ENCODE measurements at regions of chr6 and their contacts with region 1.

Region 1: DNA sequence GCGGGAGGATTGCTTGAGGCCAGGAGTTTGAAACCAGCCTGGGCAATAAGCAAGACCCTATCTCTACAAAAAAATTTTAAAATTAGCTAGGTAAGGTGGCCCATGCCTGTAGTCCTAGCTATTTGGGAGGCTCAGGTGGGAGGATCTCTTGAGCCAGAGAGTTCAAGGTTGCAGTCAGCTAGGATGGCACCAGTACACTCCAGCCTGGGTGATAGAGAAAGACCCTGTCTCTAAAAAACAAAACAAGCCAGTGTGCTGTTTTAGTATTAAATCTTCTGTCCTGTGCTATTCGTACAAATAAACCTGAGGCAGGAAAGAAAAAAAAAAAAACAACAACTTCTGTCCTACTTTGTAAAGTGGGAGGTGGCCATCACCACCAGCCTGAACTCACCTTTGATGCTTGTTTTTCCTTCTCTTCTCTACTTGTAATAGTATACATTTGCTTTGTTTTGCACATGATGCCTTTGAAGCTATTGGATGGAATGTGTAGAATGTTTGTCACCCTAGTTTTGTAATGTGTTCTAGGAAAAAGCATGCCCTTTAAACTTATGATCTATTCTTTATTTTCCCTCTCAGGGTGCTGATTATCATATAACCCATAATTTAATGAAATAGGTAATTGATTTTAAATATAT is 102.5 kb downstream of the CRYBG1 start:
- DNase-seq: no peak
- H3K27ac ChIP-seq: no peak overlapping the region
- CTCF ChIP-seq: no peak

Region 2: DNA sequence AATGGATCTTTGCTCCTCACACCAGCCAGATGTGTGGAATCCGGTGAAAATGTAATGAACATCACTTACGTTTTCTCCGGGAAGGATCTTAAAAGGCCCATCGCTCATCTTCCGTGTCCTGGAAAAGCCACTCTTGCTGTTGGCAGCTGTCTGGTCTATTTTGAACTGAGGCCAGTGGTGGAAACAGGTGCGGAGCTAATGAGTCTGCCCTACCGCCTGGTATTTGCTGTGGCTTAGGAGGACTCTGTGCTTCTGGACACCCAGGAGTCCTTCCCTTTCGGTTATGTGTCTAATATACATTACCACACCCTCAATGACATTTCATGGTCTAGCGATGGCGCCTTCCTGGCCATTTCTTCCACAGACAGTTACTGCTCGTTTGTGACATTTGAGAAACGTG is 796.0 kb before region 1 on chr6:
- CTCF ChIA-PET with region 1: no interaction called
- POLR2A ChIA-PET with region 1: no interaction called
- DNase-seq: no peak
- H3K27ac ChIP-seq: no peak overlapping the region
- CTCF ChIP-seq: no peak

Region 3: DNA sequence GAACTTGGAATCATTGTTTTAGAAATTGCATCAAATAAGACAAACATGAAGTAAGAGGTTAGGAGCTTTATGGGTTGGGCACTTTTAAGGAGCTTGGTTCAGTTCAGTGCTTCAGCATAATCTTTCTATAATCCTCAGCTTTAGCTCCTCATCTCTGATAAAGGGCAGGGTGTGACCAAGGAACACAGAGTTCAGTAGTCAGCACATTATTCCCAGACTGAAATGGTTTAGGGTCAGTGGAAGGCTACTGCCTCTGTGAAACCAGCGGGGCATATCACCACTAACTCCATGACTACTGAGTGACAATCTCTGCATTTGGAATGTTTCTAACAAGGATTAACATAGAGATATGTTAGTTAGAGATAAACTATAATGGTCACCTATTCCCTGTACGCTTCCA is 65.6 kb before region 1 on chr6:
- CTCF ChIA-PET with region 1: interaction called, 10 read pairs
- POLR2A ChIA-PET with region 1: no interaction called
- DNase-seq: no peak
- H3K27ac ChIP-seq: no peak overlapping the region
- CTCF ChIP-seq: no peak